Panc1 (cell line): ENCODE measurements at regions of chr1 and their contacts with region 1.

Region 1: GRCh38 chr1:66663730-66664129 is 88.5 kb upstream of the DYNLT5 start:
- DNase-seq: no peak
- ATAC-seq: no peak
- H3K4me3 ChIP-seq: no peak overlapping the region
- H3K27ac ChIP-seq: no peak overlapping the region
- H3K4me1 ChIP-seq: no peaks in the 10 kb centered on the region
- H3K27me3 ChIP-seq: no peaks in the 10 kb centered on the region
- CTCF ChIP-seq: no peak

Region 2: DNA sequence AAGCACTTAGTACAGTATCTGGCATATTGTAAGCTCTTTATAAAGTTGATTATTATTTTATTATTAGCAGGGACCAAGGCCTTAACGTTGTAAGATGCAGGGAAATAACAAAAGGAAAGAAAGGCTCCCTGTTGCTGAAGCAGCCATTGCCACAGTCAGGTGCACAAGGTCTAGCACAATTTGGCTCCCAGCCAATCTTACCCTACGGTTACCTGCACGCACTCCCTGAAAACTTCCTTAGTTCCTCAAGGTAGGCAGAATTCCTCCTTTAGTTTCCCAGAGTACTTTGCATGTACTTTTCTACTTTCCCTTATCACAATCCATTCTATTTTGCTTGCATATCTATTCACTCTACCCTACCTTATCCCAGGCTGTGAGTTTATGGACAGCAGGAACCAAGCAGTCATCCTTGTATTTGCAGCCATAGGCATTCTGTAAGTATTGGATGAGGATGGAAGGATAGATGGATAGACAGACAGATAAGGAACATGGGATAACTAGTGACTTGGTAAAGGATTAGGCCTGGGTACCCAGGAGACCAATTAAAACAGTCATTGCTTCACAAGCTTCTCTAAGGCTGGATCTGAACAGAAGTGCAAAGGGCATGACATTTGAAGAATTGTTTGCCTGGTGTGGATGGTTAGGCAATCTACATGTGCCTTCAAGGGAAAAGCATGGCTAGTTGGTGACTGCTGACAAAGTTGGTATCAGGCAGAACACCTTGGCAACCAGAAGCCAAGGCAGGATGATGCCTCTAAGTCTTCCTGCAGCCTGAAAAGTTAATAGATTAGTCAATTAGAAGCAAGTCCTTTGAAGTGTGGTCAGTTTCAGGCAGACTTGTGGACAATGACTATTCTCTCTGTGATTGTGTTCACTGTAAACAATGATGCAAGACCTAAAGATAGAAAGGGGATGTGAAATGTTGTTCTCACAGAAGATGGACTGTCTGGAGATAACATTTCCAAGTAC is 1676.5 kb before region 1 on chr1:
- CTCF ChIA-PET with region 1: no interaction called
- POLR2A ChIA-PET with region 1: interaction called, 19 read pairs
- in situ Hi-C with region 1: no loop called
- intact Hi-C with region 1: no loop called
- DNase-seq: no peak
- ATAC-seq: no peak
- H3K4me3 ChIP-seq: no peak overlapping the region
- H3K27ac ChIP-seq: no peak overlapping the region
- H3K4me1 ChIP-seq: peaks cover 13% of the 10 kb centered on the region
- H3K27me3 ChIP-seq: no peaks in the 10 kb centered on the region
- CTCF ChIP-seq: no peak